Right ventricle myocardium inferior (tissue), 1 donor: ENCODE measurements at regions of chr1 and their contacts with region 1.

Region 1: GRCh38 chr1:2525920-2526823 is at the start of gene PANK4:
- DNase-seq: peak; percentile 98
- ATAC-seq: peak; percentile 89
- total RNA-seq, gene PANK4: 46.4 TPM

Region 2: DNA sequence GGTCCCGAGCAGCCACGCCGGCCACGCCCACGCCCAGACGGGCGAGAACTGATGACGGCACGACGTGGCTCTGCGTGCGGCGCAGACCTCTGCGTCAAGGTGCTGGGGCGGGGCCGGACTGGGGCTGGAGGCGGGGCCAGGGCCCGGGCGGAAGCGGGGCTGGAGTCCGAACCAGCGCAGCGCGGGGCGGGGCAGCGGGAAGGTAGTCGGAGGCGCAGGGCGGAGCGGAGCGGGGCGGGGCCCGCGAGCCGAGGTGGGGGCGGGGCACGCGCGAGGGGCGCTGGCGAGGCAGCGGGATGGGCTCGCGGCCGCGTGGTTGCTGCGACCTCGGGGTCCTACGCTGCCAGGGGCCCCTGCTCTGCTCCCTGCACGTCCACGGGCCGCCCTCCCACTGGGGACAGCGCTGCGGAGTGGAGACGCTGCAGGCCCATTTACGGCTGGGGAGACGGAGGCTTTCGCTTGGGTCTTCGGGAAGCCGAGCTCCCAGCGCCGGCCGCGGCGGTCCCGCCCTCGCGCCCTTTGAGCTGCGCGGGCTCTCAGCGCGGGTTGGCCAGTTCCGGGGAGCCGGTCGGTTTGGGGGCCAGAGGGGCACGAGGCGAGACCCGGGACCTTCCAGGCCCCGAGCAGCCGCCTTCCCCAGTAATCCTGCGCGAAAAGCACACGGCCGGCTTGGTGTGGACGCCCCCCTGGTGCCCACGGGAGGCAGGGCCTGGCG is 113.5 kb before region 1 on chr1 and contains the start of gene PEX10:
- intact Hi-C with region 1: loop called (anchors 5 kb)
- DNase-seq: peak; percentile 99
- ATAC-seq: peak; percentile 97
- total RNA-seq, gene PEX10: 14.5 TPM

Region 3: GRCh38 chr1:2507744-2508155 is 18.4 kb before region 1 on chr1:
- intact Hi-C with region 1: loop called (anchors 2 kb)
- DNase-seq: no peak
- ATAC-seq: no peak

Region 4: GRCh38 chr1:2545759-2546514 is 19.8 kb after region 1 on chr1:
- intact Hi-C with region 1: loop called (anchors 2 kb)
- DNase-seq: peak; percentile 95
- ATAC-seq: peak; percentile 72

Region 5: GRCh38 chr1:2642560-2643413 is 116.6 kb after region 1 on chr1:
- intact Hi-C with region 1: loop called (anchors 10 kb)
- DNase-seq: peak; percentile 91
- ATAC-seq: peak; percentile 86